CD8-positive, alpha-beta T cell (primary cell): ENCODE measurements at regions of chr1 and their contacts with region 1.

Region 1: DNA sequence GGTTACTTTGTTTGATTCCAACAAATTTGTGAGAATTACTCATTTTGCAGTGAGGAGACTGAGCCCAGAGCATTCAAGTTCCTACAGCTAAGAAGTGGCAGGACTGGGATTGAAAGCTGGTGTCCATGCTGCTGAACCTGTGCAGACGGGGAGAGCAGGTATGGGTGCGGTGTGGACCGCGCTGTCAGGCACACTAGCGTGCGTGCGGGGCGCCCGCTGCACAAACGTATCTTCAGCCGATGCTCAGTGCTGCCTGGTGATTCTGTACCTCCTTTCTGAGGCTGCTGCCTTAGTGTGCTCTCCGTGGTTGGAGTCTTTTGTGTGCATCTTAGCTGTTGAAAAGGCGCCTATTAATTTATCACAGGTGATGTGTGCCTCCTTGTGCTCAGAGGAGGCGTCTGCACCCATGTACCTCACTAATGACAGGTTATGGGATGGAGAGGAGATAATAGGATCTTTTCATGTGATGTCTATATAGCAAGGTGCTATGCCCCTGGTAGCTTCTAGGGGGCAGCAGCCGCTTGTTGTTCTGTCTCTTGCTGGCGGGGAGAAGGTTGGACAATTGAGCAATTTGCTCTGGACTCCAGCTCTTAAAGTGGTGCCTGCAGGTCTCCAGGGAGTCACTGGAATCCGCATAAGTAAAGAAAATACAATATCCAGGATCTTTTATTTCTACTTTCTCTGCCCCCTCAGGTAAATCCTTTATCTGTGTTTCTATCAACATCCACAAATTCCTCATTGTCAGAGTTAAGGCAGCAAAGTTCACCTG is 32.5 kb downstream of the PEX14 start:
- DNase-seq: peak; percentile 22 to 76 (median 57)
- ATAC-seq: peak; percentile 59
- H3K4me3 ChIP-seq: no peak overlapping the region
- H3K4me3 Mint-ChIP-seq: no peak overlapping the region
- H3K27ac ChIP-seq: no peak overlapping the region
- H3K27ac Mint-ChIP-seq: peak overlapping the region; percentile 39
- H3K4me1 ChIP-seq: peaks cover 35% of the 10 kb centered on the region
- H3K4me1 Mint-ChIP-seq: peaks cover 44% of the 10 kb centered on the region
- H3K27me3 ChIP-seq: no peaks in the 10 kb centered on the region
- H3K27me3 Mint-ChIP-seq: no peaks in the 10 kb centered on the region
- CTCF ChIP-seq: peak; percentile 81

Region 2: GRCh38 chr1:10561955-10562354 is 54.7 kb after region 1 on chr1:
- CTCF ChIA-PET with region 1: interaction called, 3 read pairs
- POLR2A ChIA-PET with region 1: no interaction called
- intact Hi-C with region 1: loop called in 1 of 2 experiments (anchors 1 kb)
- DNase-seq: peak in 3 of 9 experiments; percentile 26 to 48 (median 35)
- ATAC-seq: no peak
- H3K4me3 ChIP-seq: no peak overlapping the region
- H3K4me3 Mint-ChIP-seq: no peak overlapping the region
- H3K27ac ChIP-seq: no peak overlapping the region
- H3K27ac Mint-ChIP-seq: peak overlapping the region; percentile 6
- H3K4me1 ChIP-seq: no peaks in the 10 kb centered on the region
- H3K4me1 Mint-ChIP-seq: no peaks in the 10 kb centered on the region
- H3K27me3 ChIP-seq: no peaks in the 10 kb centered on the region
- H3K27me3 Mint-ChIP-seq: no peaks in the 10 kb centered on the region
- CTCF ChIP-seq: no peak

Region 3: GRCh38 chr1:10867138-10867721 is 359.9 kb after region 1 on chr1:
- CTCF ChIA-PET with region 1: interaction called, 19 read pairs
- POLR2A ChIA-PET with region 1: no interaction called
- intact Hi-C with region 1: no loop called
- DNase-seq: peak; percentile 23 to 82 (median 69)
- ATAC-seq: peak; percentile 81
- H3K4me3 ChIP-seq: peak overlapping the region; percentile 21 to 28
- H3K4me3 Mint-ChIP-seq: peak overlapping the region; percentile 57
- H3K27ac ChIP-seq: no peak overlapping the region
- H3K27ac Mint-ChIP-seq: no peak overlapping the region
- H3K4me1 ChIP-seq: peaks cover 12% of the 10 kb centered on the region
- H3K4me1 Mint-ChIP-seq: peaks cover 19% of the 10 kb centered on the region
- H3K27me3 ChIP-seq: peaks cover 2 to 15% of the 10 kb centered on the region in 2 experiments
- H3K27me3 Mint-ChIP-seq: peaks cover 52% of the 10 kb centered on the region
- CTCF ChIP-seq: peak; percentile 74

Region 4: DNA sequence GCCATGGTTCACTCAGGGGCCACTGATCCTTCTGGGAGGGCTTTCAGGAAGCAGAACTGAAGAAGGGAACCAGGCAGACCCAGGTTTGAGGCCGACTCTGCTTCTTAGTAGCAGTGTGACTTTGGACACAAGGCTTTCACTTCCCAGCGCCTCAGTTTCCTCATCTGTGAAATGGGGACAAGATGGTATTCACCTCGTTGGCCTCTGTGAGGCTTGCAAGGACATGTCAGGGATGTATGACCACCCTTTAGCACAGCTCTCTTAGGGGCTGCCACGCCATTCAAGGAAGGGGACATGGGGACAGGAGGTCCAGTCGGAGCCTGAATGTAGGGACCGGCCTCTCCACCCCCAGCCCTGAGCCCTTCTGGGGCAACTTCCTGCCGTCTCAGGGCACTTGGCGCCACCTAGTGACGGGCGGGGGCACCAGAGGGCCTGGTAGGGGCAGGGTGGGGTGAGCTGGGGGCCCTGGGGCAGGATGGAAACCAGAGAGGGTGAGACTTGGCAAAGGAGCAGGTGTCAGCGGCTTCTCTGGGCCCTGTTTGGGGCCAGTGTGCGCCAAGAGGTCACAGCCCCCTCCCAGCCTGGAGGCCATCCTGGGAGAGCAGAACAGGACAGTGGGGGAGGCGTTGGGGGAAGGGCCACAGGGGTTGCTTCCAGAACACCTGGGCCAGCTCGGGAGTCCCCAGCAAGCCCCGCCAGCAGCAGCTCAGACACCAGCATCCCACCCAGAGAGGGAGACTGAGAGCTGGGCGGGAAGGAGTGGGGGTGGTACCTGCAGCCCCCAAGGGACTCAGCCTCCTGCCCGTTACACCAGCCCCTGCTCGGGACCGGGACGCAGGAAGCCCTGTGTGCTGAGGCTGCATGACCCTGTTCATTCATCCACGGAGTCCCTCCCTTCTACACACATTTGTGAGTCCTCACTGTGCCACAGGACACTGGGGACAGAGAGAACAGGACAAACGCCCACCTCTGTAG is 402.7 kb after region 1 on chr1:
- CTCF ChIA-PET with region 1: interaction called, 10 read pairs
- POLR2A ChIA-PET with region 1: no interaction called
- intact Hi-C with region 1: loop called in 1 of 2 experiments (anchors 5 kb)
- DNase-seq: peak; percentile 64 to 87 (median 81)
- ATAC-seq: peak; percentile 95
- H3K4me3 ChIP-seq: no peak overlapping the region
- H3K4me3 Mint-ChIP-seq: no peak overlapping the region
- H3K27ac ChIP-seq: no peak overlapping the region
- H3K27ac Mint-ChIP-seq: no peak overlapping the region
- H3K4me1 ChIP-seq: peaks cover 29% of the 10 kb centered on the region
- H3K4me1 Mint-ChIP-seq: peaks cover 14% of the 10 kb centered on the region
- H3K27me3 ChIP-seq: no peaks in the 10 kb centered on the region
- H3K27me3 Mint-ChIP-seq: no peaks in the 10 kb centered on the region
- CTCF ChIP-seq: peak; percentile 66

Region 5: DNA sequence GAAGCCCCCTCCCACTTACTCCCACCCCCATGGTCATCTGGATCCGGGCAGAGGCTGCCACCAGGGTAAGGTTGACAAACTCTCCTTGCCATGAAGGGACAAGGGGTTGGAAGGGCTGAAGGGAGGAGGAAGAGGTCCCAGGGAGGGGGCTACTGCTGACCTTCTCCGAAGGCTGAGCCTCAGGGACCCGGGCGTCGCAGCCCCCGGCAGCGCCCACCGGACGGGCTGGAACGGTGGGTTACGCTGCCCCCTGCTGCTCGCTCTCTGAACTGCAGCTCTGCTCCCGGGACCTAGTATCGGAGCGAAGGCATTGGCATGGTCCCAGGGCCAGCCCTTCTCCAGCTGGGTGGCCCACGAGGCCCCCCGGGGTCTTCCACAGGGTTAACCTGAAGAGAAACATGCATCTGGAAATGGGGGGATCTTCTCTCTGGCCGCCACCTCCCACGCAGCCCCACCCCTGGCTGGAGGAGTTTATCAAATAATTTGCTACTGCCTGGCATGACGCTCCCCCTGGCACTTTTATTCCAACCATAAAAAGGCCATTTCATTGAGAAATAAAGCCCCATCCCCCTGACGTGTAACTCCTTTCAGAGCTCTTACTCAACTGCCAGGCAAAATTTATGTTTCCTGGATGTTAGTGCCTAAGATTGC is 434.7 kb after region 1 on chr1:
- CTCF ChIA-PET with region 1: interaction called, 10 read pairs
- POLR2A ChIA-PET with region 1: no interaction called
- intact Hi-C with region 1: loop called in 1 of 2 experiments (anchors 2 kb)
- DNase-seq: peak; percentile 47 to 78 (median 70)
- ATAC-seq: peak; percentile 75
- H3K4me3 ChIP-seq: no peak overlapping the region
- H3K4me3 Mint-ChIP-seq: no peak overlapping the region
- H3K27ac ChIP-seq: no peak overlapping the region
- H3K27ac Mint-ChIP-seq: no peak overlapping the region
- H3K4me1 ChIP-seq: peaks cover 43% of the 10 kb centered on the region
- H3K4me1 Mint-ChIP-seq: peaks cover 41% of the 10 kb centered on the region
- H3K27me3 ChIP-seq: peaks cover 6 to 7% of the 10 kb centered on the region in 2 experiments
- H3K27me3 Mint-ChIP-seq: peaks cover 25% of the 10 kb centered on the region
- CTCF ChIP-seq: peak; percentile 82